ENCODE measurements at regions of chr12 and their contacts with region 1.

Region 1: DNA sequence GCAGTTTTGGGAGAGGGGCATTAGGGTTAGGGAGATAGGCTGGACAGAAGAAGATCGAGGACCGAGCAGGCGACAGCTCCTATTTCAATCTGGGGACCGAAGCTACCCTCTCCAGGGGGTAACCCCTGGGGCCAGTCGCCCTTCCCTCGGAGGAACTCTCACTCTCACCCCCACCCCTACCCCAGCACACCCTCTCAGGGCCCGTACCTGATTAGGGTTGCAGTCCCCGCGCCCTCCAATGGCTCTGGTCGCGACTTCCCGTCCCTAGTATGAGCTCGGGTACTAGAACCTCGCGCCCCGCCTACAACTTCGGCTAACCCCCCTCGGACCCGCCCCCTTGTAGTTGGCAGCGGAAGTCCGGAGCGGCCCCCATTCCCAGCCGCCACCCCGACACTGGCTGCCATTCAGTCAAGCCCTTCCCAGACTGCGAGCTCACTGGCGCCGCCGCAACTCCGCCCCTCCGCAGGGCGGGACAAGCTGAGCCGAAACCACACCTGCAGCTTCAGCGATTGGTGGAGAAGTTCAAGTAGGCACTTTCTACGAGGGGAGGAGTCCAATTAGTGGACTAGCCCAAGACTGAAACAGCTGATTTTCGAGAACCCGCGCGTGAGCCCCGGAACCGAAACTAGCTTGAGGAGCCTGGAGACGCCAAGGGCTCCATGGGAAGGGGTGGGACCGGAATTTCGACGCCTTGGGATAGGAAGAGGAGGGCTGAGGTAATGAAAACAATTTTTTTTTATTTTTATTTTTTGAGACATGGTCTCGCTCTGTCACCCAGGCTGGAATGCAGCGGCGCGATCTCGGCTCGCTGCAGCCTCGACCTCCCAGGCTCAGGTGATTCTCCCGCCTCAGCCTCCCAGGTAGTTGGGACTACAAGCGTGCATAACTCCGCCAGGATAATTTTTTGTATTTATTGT is at the start of gene STAT2:
- DNase-seq: peak; percentile 95 to 100 (median 99)

Region 2: DNA sequence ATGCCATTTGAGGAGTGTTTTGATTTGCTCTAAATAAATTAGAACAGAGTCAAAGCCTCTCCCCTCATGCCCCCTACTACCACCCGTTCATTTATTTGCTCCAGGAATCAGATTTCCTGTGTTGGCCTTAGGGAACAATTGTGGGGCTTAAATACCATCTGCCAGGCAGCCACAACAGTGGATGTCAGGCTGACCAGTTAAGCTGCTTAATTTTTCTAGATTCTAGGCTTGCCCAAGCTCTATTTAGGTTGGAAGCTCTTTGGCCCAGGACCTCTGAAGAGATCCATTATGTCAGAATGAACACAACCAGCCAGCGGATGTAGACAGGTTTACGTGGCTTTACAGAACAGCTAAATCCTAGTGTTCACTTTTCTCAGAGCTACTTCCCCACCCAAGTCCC is 90.1 kb after region 1 on chr12:
- intact Hi-C with region 1: loop called (anchors 5 kb)
- DNase-seq: no peak

Measured in head of caudate nucleus (tissue), 42 donors.